Activated CD4-positive, alpha-beta T cell treated with anti-CD3 and anti-CD28 coated beads for 36 hours (primary cell): ENCODE measurements at regions of chr12 and their contacts with region 1.

Region 1: DNA sequence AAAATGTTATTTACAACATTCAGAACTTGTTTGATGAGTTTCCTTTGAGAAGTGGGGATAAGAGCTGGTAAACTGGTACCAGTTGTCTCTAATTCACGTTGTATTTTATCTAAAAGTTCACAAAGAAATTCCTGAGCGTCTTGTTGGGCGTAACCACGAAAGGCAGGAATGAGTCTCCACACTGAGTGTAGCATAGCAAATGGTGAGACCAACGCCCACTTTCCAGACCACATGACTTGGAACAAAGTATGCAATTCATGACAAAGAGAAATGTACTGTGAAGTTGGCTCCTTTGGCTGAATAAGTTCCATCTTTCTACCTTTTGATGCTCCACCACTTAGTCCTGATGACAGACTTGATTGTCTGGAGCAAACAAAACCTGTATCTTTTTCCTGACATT is 18.4 kb downstream of the USP44 start:
- DNase-seq: peak; percentile 51
- ATAC-seq: peak; percentile 47
- H3K4me3 Mint-ChIP-seq: no peak overlapping the region
- H3K27ac Mint-ChIP-seq: no peak overlapping the region
- H3K4me1 Mint-ChIP-seq: peaks cover 6% of the 10 kb centered on the region
- H3K27me3 Mint-ChIP-seq: no peaks in the 10 kb centered on the region

Region 2: DNA sequence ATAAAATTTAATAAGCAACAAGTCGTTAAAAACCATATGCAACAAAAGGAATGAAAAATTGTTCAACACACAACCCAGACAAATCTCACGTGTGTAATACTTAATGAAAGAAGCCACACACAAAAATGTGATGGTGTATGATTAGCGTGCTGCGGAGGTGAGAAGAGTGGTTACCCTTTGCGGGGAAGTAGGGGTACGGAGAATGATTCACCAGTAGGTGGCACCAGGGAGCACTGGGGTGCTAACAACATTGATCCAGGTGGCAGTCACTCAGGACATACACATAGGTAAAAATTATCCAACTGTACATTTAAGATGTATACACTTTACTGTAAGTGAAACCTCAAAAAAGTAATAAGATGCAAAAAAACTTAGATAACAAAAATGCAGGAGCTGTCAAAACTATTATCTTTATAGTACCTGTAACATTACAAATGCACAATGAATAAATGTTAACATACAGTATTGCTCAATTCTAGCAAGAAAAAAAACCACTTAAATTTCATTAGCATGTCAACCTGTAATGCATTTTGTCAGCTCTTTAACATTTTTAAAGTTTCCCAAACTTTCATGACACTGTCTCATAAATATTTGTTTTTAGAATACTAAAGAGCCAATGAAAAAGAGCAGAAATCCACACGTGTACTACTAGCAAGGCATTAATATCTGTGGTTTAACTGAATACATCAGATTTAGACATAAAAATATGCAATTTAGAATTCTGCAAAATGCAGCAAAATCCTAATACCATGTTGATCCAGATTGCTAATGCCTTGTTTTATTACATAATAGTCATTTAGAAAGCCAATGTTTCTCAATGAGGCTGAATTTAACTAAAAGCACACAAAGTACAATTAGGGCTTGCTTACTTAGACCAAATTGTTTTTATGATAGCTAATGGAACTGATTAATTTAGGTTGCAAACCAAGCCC is 929.2 kb before region 1 on chr12:
- CTCF ChIA-PET with region 1: no interaction called
- POLR2A ChIA-PET with region 1: no interaction called
- intact Hi-C with region 1: loop called in 1 of 2 experiments (anchors 5 kb)
- DNase-seq: peak; percentile 76
- ATAC-seq: peak; percentile 55
- H3K4me3 Mint-ChIP-seq: no peak overlapping the region
- H3K27ac Mint-ChIP-seq: no peak overlapping the region
- H3K4me1 Mint-ChIP-seq: no peaks in the 10 kb centered on the region
- H3K27me3 Mint-ChIP-seq: peaks cover 16% of the 10 kb centered on the region

Region 3: DNA sequence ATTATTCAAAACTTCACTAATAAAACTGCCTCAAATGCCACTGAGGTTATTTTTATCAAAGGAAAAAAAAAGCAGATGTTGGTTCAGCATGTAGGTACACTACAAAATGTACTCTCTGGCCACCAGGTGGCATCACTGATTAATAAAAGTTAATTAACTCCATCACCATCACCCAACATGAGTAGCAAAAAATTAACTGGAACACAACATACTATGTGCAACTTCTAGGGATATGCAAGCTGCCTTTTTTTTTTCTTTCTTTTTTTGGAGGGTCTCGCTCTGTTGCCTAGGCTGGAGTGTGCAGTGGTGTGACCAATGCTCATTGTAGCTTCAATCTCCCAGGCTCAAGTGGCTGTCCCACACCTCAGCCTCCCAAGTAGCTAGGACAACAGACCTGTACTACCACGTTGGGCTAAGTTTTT is 415.7 kb before region 1 on chr12:
- CTCF ChIA-PET with region 1: interaction called, 57 read pairs
- POLR2A ChIA-PET with region 1: no interaction called
- intact Hi-C with region 1: loop called (anchors 1 kb)
- DNase-seq: peak; percentile 75
- ATAC-seq: peak; percentile 76
- H3K4me3 Mint-ChIP-seq: no peak overlapping the region
- H3K27ac Mint-ChIP-seq: no peak overlapping the region
- H3K4me1 Mint-ChIP-seq: peaks cover 4% of the 10 kb centered on the region
- H3K27me3 Mint-ChIP-seq: no peaks in the 10 kb centered on the region

Region 4: GRCh38 chr12:95336390-95337067 is 196.3 kb before region 1 on chr12:
- CTCF ChIA-PET with region 1: interaction called, 3 read pairs
- POLR2A ChIA-PET with region 1: no interaction called
- intact Hi-C with region 1: loop called (anchors 10 kb)
- DNase-seq: no peak
- ATAC-seq: no peak
- H3K4me3 Mint-ChIP-seq: no peak overlapping the region
- H3K27ac Mint-ChIP-seq: no peak overlapping the region
- H3K4me1 Mint-ChIP-seq: peaks cover 5% of the 10 kb centered on the region
- H3K27me3 Mint-ChIP-seq: no peaks in the 10 kb centered on the region

Region 5: DNA sequence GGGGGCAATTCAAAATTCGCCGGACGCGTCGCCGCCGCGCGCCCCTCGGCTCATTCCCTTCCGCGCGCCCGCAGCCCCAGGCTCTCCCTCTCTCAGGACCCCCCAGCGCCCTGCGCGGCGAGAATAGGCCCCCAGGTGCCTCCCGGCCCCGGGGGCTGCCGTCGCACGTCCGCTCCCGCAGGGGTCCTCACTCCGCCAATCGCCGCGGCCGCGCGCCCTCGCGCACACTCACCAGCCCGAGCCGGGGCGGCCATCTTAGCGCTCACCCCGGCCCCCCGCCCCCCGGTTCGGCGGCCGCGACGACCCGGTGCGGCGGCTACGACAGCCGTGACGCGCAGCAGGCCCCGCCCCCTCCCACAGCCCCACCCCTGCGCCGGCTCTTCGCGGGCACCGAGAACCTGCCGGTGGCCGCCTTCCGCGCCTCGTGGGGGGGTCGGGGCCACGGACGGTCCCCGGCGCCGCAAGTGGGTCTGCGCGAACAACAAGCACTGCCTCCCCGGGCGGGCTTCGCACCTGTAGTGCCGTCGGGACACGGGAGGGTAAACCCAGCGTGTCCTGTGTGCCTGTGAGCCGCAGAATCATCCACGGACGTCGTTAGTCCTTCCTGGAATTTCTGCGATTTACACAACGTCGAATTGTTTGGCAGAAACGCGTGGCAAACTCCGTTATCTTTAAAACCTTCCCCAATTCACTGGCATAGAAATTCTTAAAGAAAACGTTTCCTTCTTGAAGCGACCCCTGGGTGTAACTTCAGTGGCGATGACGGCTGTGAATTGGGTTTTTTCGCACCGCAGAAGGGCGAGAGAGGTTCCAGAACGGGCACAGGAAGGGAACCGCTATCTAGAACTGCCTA is 15.9 kb after region 1 on chr12:
- CTCF ChIA-PET with region 1: interaction called, 23 read pairs
- POLR2A ChIA-PET with region 1: interaction called, 3 read pairs
- intact Hi-C with region 1: no loop called
- DNase-seq: peak; percentile 82
- ATAC-seq: peak; percentile 83
- H3K4me3 Mint-ChIP-seq: peak overlapping the region; percentile 84
- H3K27ac Mint-ChIP-seq: peak overlapping the region; percentile 56
- H3K4me1 Mint-ChIP-seq: peaks cover 37% of the 10 kb centered on the region
- H3K27me3 Mint-ChIP-seq: peaks cover 16% of the 10 kb centered on the region